HepG2 (cell line): ENCODE measurements at regions of chr20 and their contacts with region 1.

Region 1: DNA sequence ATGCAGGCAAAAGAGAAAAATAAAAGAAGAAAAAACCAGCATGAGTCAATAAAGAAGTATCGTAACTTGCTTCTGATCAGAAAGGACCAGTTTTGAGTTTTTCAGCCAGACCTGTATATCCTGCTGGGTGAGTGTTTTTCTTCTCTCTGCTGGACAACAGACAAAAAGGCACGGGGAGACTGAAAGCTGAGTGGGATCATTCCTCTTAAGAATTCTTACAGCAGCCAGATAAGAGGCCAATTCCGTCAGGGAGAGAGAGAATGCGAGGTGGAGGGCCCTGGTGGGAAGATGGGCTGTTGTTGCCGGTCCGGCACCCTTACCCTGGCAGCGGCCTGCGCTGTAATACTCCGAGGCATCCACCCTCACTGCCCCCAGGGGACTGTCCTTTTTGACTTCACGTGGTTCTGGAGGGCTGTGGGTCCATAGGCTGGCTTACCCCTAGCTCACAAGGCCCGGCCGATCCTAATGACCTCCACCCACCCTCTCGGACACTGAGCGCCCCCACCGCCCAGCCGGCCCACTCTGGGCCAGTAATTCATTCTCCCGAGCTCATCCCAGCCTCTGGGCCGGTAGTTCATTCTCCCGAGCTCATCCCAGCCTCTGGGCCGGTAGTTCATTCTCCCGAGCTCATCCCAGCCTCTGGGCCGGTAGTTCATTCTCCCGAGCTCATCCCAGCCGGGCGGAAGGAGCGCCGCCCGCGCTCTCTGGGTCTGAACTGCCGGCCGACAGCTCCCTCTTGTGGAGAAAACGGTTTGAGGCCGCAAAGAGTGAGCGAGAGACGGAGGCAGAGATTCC is 118.3 kb upstream of the SIRPA start:
- DNase-seq: peak; percentile 84
- ATAC-seq: peak; percentile 95
- H3K4me3 ChIP-seq: peak overlapping the region; percentile 89 to 97 (median 94)
- H3K27ac ChIP-seq: peak overlapping the region; percentile 33
- H3K4me1 ChIP-seq: peaks cover 19% of the 10 kb centered on the region
- H3K27me3 ChIP-seq: no peaks in the 10 kb centered on the region; a peak in 1 of 5 replicates
- CTCF ChIP-seq: peak; percentile 97
- EP300 ChIP-seq: no peak
- POLR2A ChIP-seq: peak in 1 of 2 experiments; percentile 52; a peak in 2 of 4 replicates
- RAD21 ChIP-seq: peak; percentile 91

Region 2: GRCh38 chr20:1509237-1509636 is 267.6 kb before region 1 on chr20:
- CTCF ChIA-PET with region 1: no interaction called
- POLR2A ChIA-PET with region 1: no interaction called
- in situ Hi-C with region 1: no loop called
- intact Hi-C with region 1: loop called (anchors 1 kb)
- DNase-seq: peak; percentile 25
- ATAC-seq: peak; percentile 95
- H3K4me3 ChIP-seq: no peak overlapping the region
- H3K27ac ChIP-seq: no peak overlapping the region
- H3K4me1 ChIP-seq: no peaks in the 10 kb centered on the region
- H3K27me3 ChIP-seq: peaks cover 0 to 3% of the 10 kb centered on the region in 2 experiments; a peak in 3 of 5 replicates
- CTCF ChIP-seq: peak; percentile 69
- EP300 ChIP-seq: no peak
- POLR2A ChIP-seq: no peak
- RAD21 ChIP-seq: peak; percentile 50; the same call in 1 of the 2 replicates

Region 3: DNA sequence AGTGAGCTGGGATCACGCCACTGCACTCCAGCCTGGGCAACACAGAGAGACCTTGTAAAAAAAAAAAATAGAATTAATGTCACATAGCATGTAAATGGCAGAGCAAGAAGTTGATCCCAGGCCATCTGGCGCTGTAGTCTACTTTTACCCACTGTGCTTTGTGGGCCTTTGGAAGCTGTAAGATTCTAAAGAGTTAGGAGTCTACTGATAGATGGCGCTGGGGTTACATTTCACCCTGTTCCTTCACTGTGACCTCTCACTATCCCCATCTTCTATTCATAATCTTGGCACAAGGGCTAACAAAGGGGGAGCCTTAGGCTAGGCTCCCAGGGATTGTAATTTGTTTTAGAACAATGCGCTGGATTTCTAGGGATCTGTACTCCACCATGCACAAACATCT is 243.8 kb before region 1 on chr20:
- CTCF ChIA-PET with region 1: no interaction called
- POLR2A ChIA-PET with region 1: no interaction called
- in situ Hi-C with region 1: no loop called
- intact Hi-C with region 1: loop called (anchors 1 kb)
- DNase-seq: no peak
- ATAC-seq: peak; percentile 74
- H3K4me3 ChIP-seq: no peak overlapping the region
- H3K27ac ChIP-seq: no peak overlapping the region
- H3K4me1 ChIP-seq: no peaks in the 10 kb centered on the region
- H3K27me3 ChIP-seq: peaks cover 3 to 12% of the 10 kb centered on the region in 2 experiments; a peak in 1 of 5 replicates
- CTCF ChIP-seq: peak; percentile 48
- EP300 ChIP-seq: no peak
- POLR2A ChIP-seq: no peak
- RAD21 ChIP-seq: no peak

Region 4: GRCh38 chr20:1700990-1701389 is 75.9 kb before region 1 on chr20:
- CTCF ChIA-PET with region 1: no interaction called
- POLR2A ChIA-PET with region 1: no interaction called
- in situ Hi-C with region 1: no loop called
- intact Hi-C with region 1: no loop called
- DNase-seq: no peak
- ATAC-seq: no peak
- H3K4me3 ChIP-seq: no peak overlapping the region
- H3K27ac ChIP-seq: no peak overlapping the region
- H3K4me1 ChIP-seq: no peaks in the 10 kb centered on the region
- H3K27me3 ChIP-seq: no peaks in the 10 kb centered on the region
- CTCF ChIP-seq: no peak
- EP300 ChIP-seq: no peak
- POLR2A ChIP-seq: no peak
- RAD21 ChIP-seq: no peak

Region 5: DNA sequence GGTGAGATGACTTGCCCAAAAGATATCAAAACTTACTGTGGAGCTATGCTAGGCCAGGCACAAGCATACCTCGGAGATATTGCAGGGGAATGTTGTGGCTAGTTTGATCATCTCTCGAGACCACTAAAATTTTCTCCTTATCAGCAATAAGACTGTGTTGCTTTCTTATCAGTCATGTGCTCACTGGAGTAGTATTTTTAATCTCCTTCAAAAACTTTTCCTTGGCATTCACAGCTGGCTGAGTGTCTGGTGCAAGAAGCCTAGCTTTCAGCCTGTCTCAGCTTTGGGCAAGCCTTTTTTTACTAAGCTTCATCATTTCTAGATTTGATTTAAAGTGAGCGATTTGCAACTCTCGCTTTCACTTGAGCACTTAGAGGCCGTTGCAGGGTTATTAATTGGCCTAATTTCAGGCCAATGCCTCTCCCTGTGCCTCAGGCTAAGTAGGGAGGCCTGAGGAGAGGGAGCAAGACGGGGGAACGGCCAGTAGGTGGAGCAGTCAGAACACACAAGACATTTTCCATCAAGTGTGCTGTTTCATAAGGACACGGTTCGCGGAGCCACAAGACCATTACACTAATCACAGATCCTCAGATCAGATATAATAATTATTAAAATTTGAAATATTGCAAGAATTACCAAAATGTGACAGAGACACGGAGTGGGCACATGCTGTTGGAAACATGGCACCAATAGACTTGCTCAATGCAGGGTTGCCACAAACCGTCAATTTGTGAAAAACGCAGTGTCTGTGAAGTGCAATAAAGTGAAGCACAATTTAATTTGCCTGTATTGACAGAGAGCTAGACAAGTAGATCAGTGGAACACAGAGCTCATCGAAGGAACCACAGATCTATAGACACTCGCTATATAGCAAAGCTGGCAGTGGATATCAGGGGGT is 12.5 kb before region 1 on chr20:
- CTCF ChIA-PET with region 1: interaction called, 18 read pairs
- POLR2A ChIA-PET with region 1: interaction called, 4 read pairs
- in situ Hi-C with region 1: no loop called
- intact Hi-C with region 1: loop called (anchors 1 kb)
- DNase-seq: peak; percentile 73
- ATAC-seq: peak; percentile 99
- H3K4me3 ChIP-seq: no peak overlapping the region
- H3K27ac ChIP-seq: no peak overlapping the region
- H3K4me1 ChIP-seq: no peaks in the 10 kb centered on the region
- H3K27me3 ChIP-seq: no peaks in the 10 kb centered on the region; a peak in 1 of 5 replicates
- CTCF ChIP-seq: peak; percentile 90
- EP300 ChIP-seq: no peak
- POLR2A ChIP-seq: no peak
- RAD21 ChIP-seq: peak; percentile 45; the same call in 1 of the 2 replicates

Region 6: GRCh38 chr20:1830240-1830639 is 53.4 kb after region 1 on chr20:
- CTCF ChIA-PET with region 1: no interaction called
- POLR2A ChIA-PET with region 1: interaction called, 13 read pairs
- in situ Hi-C with region 1: no loop called
- intact Hi-C with region 1: no loop called
- DNase-seq: no peak
- ATAC-seq: no peak
- H3K4me3 ChIP-seq: no peak overlapping the region
- H3K27ac ChIP-seq: no peak overlapping the region
- H3K4me1 ChIP-seq: peaks cover 62% of the 10 kb centered on the region
- H3K27me3 ChIP-seq: no peaks in the 10 kb centered on the region; a peak in 1 of 5 replicates
- CTCF ChIP-seq: no peak
- EP300 ChIP-seq: no peak
- POLR2A ChIP-seq: no peak
- RAD21 ChIP-seq: no peak